Caco-2 (cell line): ENCODE measurements at regions of chr2 and their contacts with region 1.

Region 1: GRCh38 chr2:192327576-192327975 is 132.8 kb upstream of the TMEFF2 start:
- DNase-seq: no peak
- H3K4me3 ChIP-seq: no peak overlapping the region
- H3K4me3 Mint-ChIP-seq: no peak overlapping the region
- H3K27ac Mint-ChIP-seq: no peak overlapping the region
- H3K4me1 ChIP-seq: 0 out of 2 replicates have a peak, but pooled peaks cover 4% of the 10 kb centered on the region
- H3K4me1 Mint-ChIP-seq: no peaks in the 10 kb centered on the region
- H3K27me3 ChIP-seq: no peaks in the 10 kb centered on the region
- H3K27me3 Mint-ChIP-seq: no peaks in the 10 kb centered on the region
- CTCF ChIP-seq: no peak

Region 2: DNA sequence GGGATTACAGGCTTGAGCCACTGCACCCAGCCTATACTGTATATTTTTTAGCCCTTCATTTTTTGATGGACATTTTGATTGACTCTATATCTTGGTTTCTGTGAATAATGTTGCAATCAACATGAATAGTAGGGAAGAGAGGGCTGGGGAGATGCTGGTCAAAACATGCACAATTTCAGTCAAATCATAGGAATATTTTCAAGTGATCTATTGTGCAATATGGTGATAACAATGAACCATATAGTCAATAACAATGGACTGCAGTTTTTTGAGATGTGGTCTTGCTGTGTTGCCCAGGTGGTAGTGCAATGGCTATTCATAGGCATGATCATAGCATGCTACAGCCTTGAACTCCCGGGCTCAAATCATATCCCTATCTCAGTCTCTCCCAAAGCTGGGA is 131.8 kb after region 1 on chr2:
- CTCF ChIA-PET with region 1: no interaction called
- POLR2A ChIA-PET with region 1: no interaction called
- intact Hi-C with region 1: no loop called
- DNase-seq: no peak
- H3K4me3 ChIP-seq: no peak overlapping the region
- H3K4me3 Mint-ChIP-seq: no peak overlapping the region
- H3K27ac Mint-ChIP-seq: no peak overlapping the region
- H3K4me1 ChIP-seq: no peaks in the 10 kb centered on the region
- H3K4me1 Mint-ChIP-seq: no peaks in the 10 kb centered on the region
- H3K27me3 ChIP-seq: no peaks in the 10 kb centered on the region
- H3K27me3 Mint-ChIP-seq: no peaks in the 10 kb centered on the region
- CTCF ChIP-seq: no peak

Region 3: DNA sequence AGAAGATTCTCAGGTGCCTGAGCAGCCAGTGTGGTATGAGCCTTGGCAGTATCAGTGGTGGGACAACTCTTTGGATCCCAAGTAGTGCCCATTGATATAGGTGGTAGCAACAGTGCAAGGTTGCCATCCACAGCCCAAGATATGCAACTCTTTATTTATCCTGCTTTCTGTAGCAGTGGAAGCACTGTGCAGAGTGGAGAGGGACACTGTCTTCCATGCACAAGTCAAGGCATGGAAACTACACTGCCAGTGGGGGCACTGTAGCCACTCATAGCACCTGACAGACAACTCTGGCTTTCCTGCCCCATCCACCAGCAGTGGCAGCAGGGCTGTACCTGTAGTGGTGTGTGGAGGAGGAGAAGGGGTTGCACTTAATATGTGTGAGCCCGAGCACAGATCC is 276.7 kb after region 1 on chr2:
- CTCF ChIA-PET with region 1: no interaction called
- POLR2A ChIA-PET with region 1: no interaction called
- intact Hi-C with region 1: loop called (anchors 10 kb)
- DNase-seq: peak in 1 of 2 experiments; percentile 34
- H3K4me3 ChIP-seq: no peak overlapping the region
- H3K4me3 Mint-ChIP-seq: no peak overlapping the region
- H3K27ac Mint-ChIP-seq: no peak overlapping the region
- H3K4me1 ChIP-seq: no peaks in the 10 kb centered on the region
- H3K4me1 Mint-ChIP-seq: no peaks in the 10 kb centered on the region
- H3K27me3 ChIP-seq: no peaks in the 10 kb centered on the region
- H3K27me3 Mint-ChIP-seq: no peaks in the 10 kb centered on the region
- CTCF ChIP-seq: peak in 1 of 2 experiments; percentile 25

Region 4: DNA sequence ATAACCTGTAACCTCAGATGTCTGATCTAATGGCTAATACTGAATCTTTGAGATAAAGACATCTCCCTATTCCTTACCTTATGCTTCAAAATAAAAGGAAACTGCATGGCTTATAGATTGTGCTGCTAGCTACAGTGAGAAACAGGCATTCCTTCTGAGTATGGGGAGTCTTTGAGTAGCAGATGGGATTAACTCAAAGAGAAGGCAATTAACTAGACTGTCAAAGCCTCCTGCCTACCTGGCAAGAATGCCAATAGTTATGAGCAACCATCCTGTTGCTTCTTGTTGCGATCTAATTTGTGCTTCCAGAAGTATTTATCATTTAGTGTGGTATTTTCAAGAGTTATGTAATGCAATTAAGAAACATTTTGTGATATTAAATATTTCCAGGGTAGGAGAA is 527.1 kb after region 1 on chr2:
- CTCF ChIA-PET with region 1: no interaction called
- POLR2A ChIA-PET with region 1: no interaction called
- intact Hi-C with region 1: no loop called
- DNase-seq: no peak
- H3K4me3 ChIP-seq: no peak overlapping the region
- H3K4me3 Mint-ChIP-seq: no peak overlapping the region
- H3K27ac Mint-ChIP-seq: no peak overlapping the region
- H3K4me1 ChIP-seq: no peaks in the 10 kb centered on the region
- H3K4me1 Mint-ChIP-seq: no peaks in the 10 kb centered on the region
- H3K27me3 ChIP-seq: no peaks in the 10 kb centered on the region
- H3K27me3 Mint-ChIP-seq: no peaks in the 10 kb centered on the region
- CTCF ChIP-seq: no peak